Esophagus muscularis mucosa (tissue), 4 donors: ENCODE measurements at regions of chr16 and their contacts with region 1.

Region 1: DNA sequence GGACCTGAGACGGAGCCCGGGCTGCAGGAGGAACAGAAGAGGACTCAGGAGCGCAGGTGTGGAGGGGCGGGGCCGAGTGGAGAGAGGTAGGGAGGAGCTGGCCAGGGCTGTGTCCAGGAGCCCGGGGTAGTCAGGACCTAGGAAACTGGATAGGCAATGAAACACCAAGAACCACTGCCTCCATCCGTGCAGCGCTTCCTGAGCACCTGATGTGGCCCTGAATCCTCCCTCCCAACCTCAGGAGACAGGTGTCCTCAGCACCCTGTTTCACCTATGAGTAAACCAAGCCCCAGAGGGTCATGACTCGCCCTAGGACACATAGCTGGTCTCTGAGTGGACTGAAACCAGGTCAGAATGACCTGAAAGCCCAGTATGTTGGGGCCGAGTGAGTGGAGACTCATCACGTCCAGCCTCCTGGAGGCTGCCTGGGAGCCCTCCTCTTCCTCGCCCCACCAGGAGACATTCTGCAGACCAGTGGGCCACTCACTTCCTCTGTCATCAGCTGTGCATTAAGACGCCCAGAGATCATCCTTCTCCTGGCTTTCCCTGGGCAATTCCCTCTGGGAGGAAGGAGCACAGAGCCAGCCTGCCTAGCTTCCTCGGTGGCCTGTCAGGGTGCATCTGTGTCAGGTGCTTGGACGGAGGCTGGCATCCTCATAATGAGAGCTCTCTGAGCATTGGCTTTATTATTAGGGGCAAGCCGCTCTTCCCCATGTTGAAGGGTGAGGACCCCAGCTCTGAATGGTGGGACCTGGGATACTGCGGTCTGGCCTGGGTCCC is 72.8 kb downstream of the SCNN1B start:
- DNase-seq: no peak
- H3K4me3 ChIP-seq: no peak overlapping the region
- H3K27ac ChIP-seq: no peak overlapping the region
- H3K4me1 ChIP-seq: no peaks in the 10 kb centered on the region
- H3K27me3 ChIP-seq: peaks cover 0 to 23% (median 0%) of the 10 kb centered on the region in 4 donors
- CTCF ChIP-seq: no peak
- EP300 ChIP-seq: no peak
- POLR2A ChIP-seq: no peak

Region 2: GRCh38 chr16:23257637-23258036 is 117.3 kb before region 1 on chr16:
- intact Hi-C with region 1: no loop called
- DNase-seq: no peak
- H3K4me3 ChIP-seq: no peak overlapping the region
- H3K27ac ChIP-seq: no peak overlapping the region
- H3K4me1 ChIP-seq: no peaks in the 10 kb centered on the region
- H3K27me3 ChIP-seq: peaks cover 0 to 13% (median 0%) of the 10 kb centered on the region in 4 donors
- CTCF ChIP-seq: no peak
- EP300 ChIP-seq: no peak
- POLR2A ChIP-seq: no peak

Region 3: DNA sequence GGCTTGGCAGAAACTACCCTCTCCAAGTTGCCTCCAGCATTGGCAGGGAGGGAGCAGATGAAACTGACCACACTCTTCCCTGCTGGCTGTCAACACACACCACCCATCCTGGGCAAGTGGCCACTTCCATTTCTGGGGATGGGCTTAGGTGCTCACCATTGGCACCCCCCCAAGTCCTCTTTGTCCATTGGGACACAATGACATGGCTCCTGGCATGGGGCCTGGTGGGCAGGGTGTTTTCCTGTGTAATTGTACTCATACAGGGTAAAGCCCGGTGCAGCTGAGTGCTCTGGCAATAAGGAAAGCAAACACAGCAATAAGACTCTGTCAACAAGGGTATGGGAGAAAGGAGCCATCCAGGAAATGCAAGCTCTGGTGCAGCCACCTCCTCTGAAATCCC is 50.2 kb before region 1 on chr16:
- intact Hi-C with region 1: loop called (anchors 5 kb)
- DNase-seq: no peak
- H3K4me3 ChIP-seq: no peak overlapping the region
- H3K27ac ChIP-seq: no peak overlapping the region
- H3K4me1 ChIP-seq: peaks cover 0 to 7% (median 3%) of the 10 kb centered on the region in 4 donors
- H3K27me3 ChIP-seq: peaks cover 0 to 21% (median 0%) of the 10 kb centered on the region in 4 donors
- CTCF ChIP-seq: no peak
- EP300 ChIP-seq: no peak
- POLR2A ChIP-seq: no peak